Activated naive CD4-positive, alpha-beta T cell treated with anti-CD3 and anti-CD28 coated beads, Interleukin-2, amount 10 ng/mL, durations not matched to agents 7 days and 5 days (primary cell): ENCODE measurements at regions of chr7 and their contacts with region 1.

Region 1: DNA sequence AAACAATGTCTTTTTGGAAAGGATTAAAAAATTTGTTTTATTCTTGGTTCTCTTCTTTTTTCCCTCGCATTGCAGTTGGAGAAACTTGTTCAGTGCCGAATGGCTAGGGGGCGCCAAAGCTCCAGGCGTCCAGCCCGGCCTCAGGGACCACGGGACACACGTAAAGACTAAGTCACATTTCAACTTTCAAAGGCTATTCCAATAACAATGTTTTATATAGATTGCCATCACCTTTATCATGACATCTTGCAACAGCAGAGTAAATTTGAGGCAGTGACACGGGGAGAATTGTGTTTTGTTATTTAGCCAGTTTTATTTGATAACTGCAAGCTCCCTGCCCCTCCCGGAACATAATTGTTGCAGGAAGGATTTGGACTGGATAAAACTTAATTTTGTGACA is 2.2 kb upstream of the IGFBP3 start:
- DNase-seq: peak; percentile 74
- H3K4me3 Mint-ChIP-seq: peak overlapping the region; percentile 24
- H3K27ac Mint-ChIP-seq: peak overlapping the region; percentile 81
- H3K4me1 Mint-ChIP-seq: peaks cover 41% of the 10 kb centered on the region
- H3K27me3 Mint-ChIP-seq: peaks cover 65% of the 10 kb centered on the region

Region 2: GRCh38 chr7:46344529-46344928 is 421.2 kb after region 1 on chr7:
- CTCF ChIA-PET with region 1: interaction called, 10 read pairs
- DNase-seq: no peak
- H3K4me3 Mint-ChIP-seq: no peak overlapping the region
- H3K27ac Mint-ChIP-seq: no peak overlapping the region
- H3K4me1 Mint-ChIP-seq: no peaks in the 10 kb centered on the region
- H3K27me3 Mint-ChIP-seq: no peaks in the 10 kb centered on the region

Region 3: GRCh38 chr7:46352004-46352954 is 429.0 kb after region 1 on chr7:
- CTCF ChIA-PET with region 1: interaction called, 13 read pairs
- DNase-seq: peak; percentile 24
- H3K4me3 Mint-ChIP-seq: no peak overlapping the region
- H3K27ac Mint-ChIP-seq: no peak overlapping the region
- H3K4me1 Mint-ChIP-seq: no peaks in the 10 kb centered on the region
- H3K27me3 Mint-ChIP-seq: no peaks in the 10 kb centered on the region

Region 4: DNA sequence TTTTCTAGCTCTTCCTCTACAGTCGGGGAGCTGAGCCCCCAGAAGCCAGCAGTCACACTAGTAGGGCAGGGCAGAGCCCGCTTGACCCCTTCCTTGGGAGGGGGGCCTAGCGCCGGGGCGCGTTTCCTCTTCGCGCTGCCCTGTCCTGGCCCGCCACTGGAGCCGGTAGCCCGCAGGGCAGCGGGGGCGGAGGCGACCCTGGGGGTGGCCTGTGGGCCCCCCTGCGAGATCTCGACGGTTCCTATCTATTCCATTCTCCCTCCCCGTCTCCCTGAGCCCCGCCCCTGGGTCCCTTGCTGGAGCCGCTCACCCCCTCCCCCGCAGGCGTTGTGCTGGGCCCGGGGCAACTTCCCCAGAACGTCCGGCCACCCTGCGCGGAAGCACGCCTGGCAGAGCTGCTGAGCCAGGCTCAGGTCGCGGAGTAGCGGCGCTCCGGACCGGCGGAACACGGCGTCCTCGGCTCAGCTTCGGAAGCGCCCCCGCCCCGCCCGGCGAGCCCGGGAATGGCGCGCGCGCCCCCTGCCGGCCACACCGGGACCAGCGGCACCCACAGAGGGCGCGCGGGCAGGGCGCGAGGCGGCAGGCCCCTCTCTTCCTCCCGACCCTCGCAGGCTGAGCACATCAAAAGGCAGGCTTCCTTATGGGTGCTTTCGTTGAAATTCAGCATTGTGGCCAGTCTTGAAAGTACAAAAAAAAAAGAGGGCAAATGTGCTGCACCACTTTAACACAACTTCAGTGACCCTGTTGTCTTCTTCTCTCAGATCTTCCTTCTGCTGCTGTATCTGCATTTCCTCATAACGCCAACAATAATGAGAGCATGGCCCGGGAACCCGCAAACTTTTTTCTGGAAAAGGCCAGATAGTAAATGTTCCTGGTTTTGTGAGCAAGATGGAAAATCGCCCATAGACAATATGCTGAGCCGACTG is 1331.1 kb after region 1 on chr7:
- CTCF ChIA-PET with region 1: interaction called, 10 read pairs
- DNase-seq: peak; percentile 61
- H3K4me3 Mint-ChIP-seq: peak overlapping the region; percentile 43
- H3K27ac Mint-ChIP-seq: no peak overlapping the region
- H3K4me1 Mint-ChIP-seq: peaks cover 6% of the 10 kb centered on the region
- H3K27me3 Mint-ChIP-seq: peaks cover 27% of the 10 kb centered on the region